AG04449 (cell line): ENCODE measurements at regions of chr2 and their contacts with region 1.

Region 1: DNA sequence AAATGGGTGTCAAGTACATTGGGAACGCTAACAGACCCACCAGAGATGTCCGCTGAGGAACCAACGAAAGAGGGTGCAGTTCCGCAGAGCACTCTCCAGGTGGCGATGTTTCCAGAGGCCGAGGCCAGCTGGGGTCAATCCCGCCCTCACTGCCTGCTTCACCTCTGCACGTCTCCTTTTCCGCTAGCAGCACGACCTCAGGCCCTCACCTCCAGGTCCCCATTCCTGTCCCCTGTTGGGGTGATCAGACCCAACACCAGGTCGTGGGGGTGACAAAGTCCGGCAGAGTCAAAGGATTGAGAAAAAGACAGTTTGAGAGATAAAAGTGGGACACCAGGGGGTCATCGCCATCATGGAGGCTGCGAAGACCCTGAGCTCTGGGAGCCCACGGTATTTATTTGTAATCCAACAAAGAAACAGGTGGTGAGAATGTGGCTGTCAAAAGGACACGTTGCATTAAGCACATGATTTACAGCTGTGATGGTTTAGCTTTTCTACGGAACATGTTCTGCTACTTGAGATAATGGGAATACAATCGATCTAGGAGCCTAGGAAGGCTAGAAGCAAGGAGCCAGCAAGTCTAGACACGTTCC is 27.3 kb downstream of the ZAP70 start:
- DNase-seq: no peak
- H3K4me3 ChIP-seq: no peak overlapping the region
- CTCF ChIP-seq: peak; percentile 93

Region 2: GRCh38 chr2:97617911-97618310 is 122.8 kb before region 1 on chr2:
- CTCF ChIA-PET with region 1: no interaction called
- POLR2A ChIA-PET with region 1: no interaction called
- DNase-seq: no peak
- H3K4me3 ChIP-seq: no peak overlapping the region
- CTCF ChIP-seq: no peak

Region 3: DNA sequence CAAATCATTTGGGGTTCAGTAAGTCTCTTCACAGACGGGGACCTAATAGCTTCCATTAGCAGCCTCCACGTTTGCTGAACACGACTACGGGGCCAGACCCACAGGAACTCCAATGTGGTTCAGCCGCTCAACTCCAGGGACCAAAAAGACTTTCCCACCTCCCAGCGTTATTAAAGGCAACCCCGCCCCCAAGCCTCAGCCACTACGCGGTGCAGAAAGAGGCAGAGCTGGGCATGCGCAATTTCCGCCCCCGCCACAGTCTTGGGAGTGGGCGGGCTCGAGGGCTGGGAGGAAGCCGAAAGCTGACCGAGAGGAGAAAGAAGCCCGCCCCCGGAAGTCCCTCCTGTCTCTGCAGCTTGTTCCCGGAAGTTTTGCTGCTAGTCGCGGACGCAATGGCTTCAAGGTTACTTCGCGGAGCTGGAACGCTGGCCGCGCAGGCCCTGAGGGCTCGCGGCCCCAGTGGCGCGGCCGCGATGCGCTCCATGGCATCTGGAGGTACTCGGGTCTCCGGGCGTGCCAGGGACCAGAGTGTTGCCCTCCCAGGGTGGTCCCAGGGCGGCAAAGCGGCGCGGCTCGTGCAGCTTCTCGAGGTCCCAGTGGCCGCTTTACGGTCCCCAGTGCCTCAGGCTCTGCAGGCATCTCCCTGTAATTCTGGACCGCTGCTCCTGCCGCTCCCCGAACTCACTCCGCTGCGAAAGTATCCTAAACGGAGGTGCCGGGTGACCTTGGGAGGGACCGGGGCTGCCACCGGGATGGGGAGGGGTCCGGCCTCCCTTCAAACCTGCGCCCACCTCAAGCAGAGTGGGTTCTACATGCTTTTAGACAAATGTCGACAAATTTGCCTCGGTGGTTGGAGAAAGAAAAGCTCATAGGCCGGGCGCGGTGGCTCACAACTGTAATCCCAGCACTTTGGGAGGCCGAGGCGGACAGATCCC is 94.7 kb before region 1 on chr2 and contains the start of gene COX5B:
- CTCF ChIA-PET with region 1: no interaction called
- POLR2A ChIA-PET with region 1: no interaction called
- DNase-seq: peak; percentile 72
- H3K4me3 ChIP-seq: peak within 1 kb of the TSS; percentile 97
- CTCF ChIP-seq: no peak

Region 4: DNA sequence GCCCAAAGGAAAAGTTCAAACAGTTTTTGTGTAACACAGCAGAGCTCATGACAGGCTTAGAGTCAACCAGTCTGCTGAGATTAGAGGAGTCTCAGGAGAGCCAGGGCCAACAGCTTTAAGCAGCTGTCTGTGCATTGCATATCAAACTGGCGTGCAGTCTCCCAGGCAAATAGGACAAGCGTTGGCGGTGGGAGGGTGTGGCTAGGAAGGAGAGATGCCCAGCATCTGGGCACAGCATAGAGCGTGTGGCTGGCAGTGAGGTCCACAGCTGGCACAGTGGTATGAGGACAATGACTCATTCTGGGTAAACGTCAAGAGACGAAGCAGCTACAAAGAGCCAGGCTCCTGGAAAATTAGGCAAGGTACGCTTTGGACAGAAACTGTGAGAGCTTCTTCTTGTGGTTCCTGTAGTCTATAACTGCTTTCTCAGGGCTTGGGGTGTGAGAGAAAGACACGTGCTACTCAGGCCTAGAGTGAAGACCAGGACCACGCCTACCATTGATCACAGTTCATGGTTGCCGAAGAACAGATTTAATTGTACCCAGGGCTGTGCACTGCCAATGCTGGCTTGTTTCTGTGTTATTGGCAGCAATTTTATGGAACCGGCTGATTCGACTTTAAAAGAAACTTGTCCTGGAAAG is 12.5 kb before region 1 on chr2:
- CTCF ChIA-PET with region 1: interaction called, 22 read pairs
- POLR2A ChIA-PET with region 1: no interaction called
- DNase-seq: no peak
- H3K4me3 ChIP-seq: no peak overlapping the region
- CTCF ChIP-seq: no peak

Region 5: DNA sequence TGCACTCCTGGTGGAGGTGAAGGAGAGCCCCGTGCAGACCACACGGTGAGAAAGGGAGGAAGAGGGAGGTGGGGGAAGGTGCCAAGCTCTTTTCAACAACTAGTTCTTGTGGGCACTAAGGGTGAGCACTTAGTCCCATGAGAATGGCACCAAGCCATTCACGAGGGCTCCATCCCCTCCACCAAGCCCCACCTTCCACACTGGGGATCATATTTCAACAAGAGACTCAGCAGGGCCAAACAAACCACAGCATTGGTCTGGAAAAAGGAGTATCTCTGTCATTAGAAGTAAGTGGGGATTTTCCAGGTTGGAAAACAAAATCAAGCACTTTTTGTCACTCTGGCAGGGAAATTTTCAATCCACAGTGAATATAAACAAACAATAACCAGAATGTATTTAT is 11.1 kb after region 1 on chr2:
- CTCF ChIA-PET with region 1: interaction called, 43 read pairs
- POLR2A ChIA-PET with region 1: no interaction called
- DNase-seq: no peak
- H3K4me3 ChIP-seq: no peak overlapping the region
- CTCF ChIP-seq: no peak

Region 6: GRCh38 chr2:97834610-97835009 is 93.9 kb after region 1 on chr2:
- CTCF ChIA-PET with region 1: no interaction called
- POLR2A ChIA-PET with region 1: no interaction called
- DNase-seq: no peak
- H3K4me3 ChIP-seq: no peak overlapping the region
- CTCF ChIP-seq: no peak

Region 7: GRCh38 chr2:98012561-98012991 is 271.9 kb after region 1 on chr2:
- CTCF ChIA-PET with region 1: no interaction called
- POLR2A ChIA-PET with region 1: no interaction called
- DNase-seq: no peak
- H3K4me3 ChIP-seq: no peak overlapping the region
- CTCF ChIP-seq: no peak

Region 8: DNA sequence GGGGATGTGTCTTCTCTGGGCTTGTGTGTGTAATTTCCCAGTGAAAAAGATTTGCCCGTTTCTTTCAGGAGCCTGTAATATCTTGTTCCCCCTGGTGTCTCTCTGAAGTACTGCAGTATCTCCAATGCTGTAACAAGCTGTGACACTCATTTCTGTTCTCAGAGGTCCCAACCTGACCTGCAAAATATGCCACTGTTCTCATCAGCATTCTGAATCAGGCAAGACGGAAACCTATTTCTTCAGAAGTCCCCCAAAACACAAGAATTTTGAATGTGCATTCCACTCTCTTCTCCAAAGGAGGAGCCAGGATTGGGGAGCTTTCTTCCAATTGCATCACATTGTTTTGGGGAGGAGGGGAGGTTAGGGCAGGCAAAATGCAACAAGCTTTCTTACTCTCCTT is 528.6 kb after region 1 on chr2:
- CTCF ChIA-PET with region 1: interaction called, 10 read pairs
- POLR2A ChIA-PET with region 1: no interaction called
- DNase-seq: peak; percentile 3
- H3K4me3 ChIP-seq: no peak overlapping the region
- CTCF ChIP-seq: peak; percentile 60

Region 9: GRCh38 chr2:98385050-98385699 is 644.5 kb after region 1 on chr2:
- CTCF ChIA-PET with region 1: interaction called, 35 read pairs
- POLR2A ChIA-PET with region 1: no interaction called
- DNase-seq: no peak
- H3K4me3 ChIP-seq: no peak overlapping the region
- CTCF ChIP-seq: peak; percentile 97